ENCODE measurements at regions of chr3 and their contacts with region 1.

Region 1: GRCh38 chr3:141875374-141875892 is 1.0 kb upstream of the ATP1B3 start:
- DNase-seq: peak; percentile 72
- ATAC-seq: peak; percentile 64
- H3K4me3 Mint-ChIP-seq: peak overlapping the region; percentile 93
- H3K27ac Mint-ChIP-seq: peak overlapping the region; percentile 93
- H3K4me1 Mint-ChIP-seq: peaks cover 28% of the 10 kb centered on the region
- H3K27me3 Mint-ChIP-seq: no peaks in the 10 kb centered on the region
- CTCF ChIP-seq: no peak

Region 2: DNA sequence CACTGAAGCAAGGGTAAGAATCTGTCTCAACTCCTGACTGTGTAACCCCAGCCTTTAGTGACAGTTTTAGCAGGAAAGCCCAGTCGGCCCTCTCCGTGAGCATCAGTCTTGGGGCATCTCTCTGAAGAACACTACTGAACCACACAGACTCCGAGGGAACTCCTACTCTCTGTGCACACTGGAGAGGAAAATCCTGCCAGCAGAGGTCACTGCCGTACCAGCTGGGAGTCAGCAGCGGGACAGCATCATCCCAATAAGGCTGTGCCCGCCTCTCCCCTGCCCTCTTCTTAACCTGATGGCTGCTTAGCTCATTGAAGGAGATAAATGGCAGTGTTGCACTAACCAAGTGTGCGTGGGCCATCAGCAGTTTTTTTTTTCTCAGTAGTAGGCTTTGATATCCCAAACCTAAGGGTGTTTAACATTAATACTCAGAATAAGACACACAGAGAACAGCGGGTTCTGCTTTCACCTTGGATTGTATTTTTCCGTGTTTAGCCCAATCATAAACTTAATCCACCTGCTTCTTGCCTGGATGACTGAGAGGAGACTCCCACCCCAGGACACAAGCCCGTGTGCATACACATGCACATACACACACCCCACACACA is 415.2 kb before region 1 on chr3:
- CTCF ChIA-PET with region 1: interaction called, 3 read pairs
- POLR2A ChIA-PET with region 1: interaction called, 3 read pairs
- intact Hi-C with region 1: loop called (anchors 1 kb)
- DNase-seq: peak; percentile 67
- ATAC-seq: peak; percentile 99
- H3K4me3 Mint-ChIP-seq: no peak overlapping the region
- H3K27ac Mint-ChIP-seq: no peak overlapping the region
- H3K4me1 Mint-ChIP-seq: peaks cover 11% of the 10 kb centered on the region
- H3K27me3 Mint-ChIP-seq: no peaks in the 10 kb centered on the region
- CTCF ChIP-seq: no peak

Region 3: GRCh38 chr3:141796081-141796888 is 79.1 kb before region 1 on chr3:
- CTCF ChIA-PET with region 1: interaction called, 8 read pairs
- POLR2A ChIA-PET with region 1: interaction called, 20 read pairs
- intact Hi-C with region 1: loop called (anchors 1 kb)
- DNase-seq: peak; percentile 39
- ATAC-seq: peak; percentile 86
- H3K4me3 Mint-ChIP-seq: peak overlapping the region; percentile 85
- H3K27ac Mint-ChIP-seq: peak overlapping the region; percentile 85
- H3K4me1 Mint-ChIP-seq: peaks cover 34% of the 10 kb centered on the region
- H3K27me3 Mint-ChIP-seq: peaks cover 2% of the 10 kb centered on the region
- CTCF ChIP-seq: no peak

Region 4: GRCh38 chr3:141955175-141955574 is 79.7 kb after region 1 on chr3:
- CTCF ChIA-PET with region 1: no interaction called
- POLR2A ChIA-PET with region 1: no interaction called
- intact Hi-C with region 1: no loop called
- DNase-seq: no peak
- ATAC-seq: no peak
- H3K4me3 Mint-ChIP-seq: no peak overlapping the region
- H3K27ac Mint-ChIP-seq: no peak overlapping the region
- H3K4me1 Mint-ChIP-seq: peaks cover 5% of the 10 kb centered on the region
- H3K27me3 Mint-ChIP-seq: no peaks in the 10 kb centered on the region
- CTCF ChIP-seq: no peak

Region 5: DNA sequence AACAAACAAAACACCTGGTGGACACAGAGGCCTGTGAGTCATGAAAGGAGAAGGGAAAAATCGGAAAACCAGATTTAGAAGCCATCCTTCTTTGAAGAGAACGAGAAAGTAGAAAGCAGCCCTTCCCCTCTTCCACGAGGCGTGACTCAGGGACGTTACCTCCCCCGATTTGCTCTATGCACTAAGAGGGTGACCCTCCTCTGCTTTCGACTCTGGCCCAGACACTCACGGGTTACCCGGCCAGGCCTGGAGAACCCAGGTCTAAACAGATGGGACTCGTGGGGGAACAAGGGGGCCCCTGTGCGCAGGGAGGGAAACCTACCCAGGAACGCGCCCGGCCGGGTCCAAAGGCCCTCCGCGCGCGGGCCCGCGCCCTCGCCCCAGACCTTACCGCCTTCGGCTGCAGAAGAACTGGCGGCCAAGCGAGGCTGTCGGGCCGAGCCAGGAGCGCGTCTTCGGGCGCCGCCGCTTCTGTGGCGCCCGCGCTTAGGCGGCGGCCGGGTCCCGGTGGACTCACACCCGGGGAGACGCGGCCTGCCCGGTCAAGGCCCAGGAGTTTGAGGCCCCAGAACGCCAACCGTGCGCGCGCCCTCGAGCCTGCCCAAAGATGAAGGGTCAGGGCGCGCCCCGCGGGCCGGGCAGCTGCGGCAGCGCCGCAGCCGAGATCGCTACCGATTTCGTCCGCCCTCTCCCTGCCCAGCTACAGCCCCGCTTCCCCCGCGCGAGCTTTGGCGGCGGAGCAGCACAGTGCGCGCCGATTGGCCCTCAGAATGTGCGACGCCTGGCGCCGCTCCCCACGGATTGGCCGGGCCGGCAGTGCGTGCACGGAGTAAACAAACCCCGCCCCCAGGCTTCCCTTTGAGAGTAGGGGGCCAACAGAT is 273.6 kb after region 1 on chr3 and contains the start of gene TFDP2:
- CTCF ChIA-PET with region 1: no interaction called
- POLR2A ChIA-PET with region 1: no interaction called
- intact Hi-C with region 1: loop called (anchors 1 kb)
- DNase-seq: peak; percentile 78
- ATAC-seq: peak; percentile 99
- H3K4me3 Mint-ChIP-seq: peak within 1 kb of the TSS; percentile 86
- H3K27ac Mint-ChIP-seq: peak within 1 kb of the TSS; percentile 72
- H3K4me1 Mint-ChIP-seq: peaks cover 14% of the 10 kb centered on the region
- H3K27me3 Mint-ChIP-seq: no peaks in the 10 kb centered on the region
- CTCF ChIP-seq: no peak
- total RNA-seq, gene TFDP2: 20.0 and 23.1 TPM in 2 replicates

Region 6: GRCh38 chr3:142468456-142468855 is 593.0 kb after region 1 on chr3:
- CTCF ChIA-PET with region 1: no interaction called
- POLR2A ChIA-PET with region 1: no interaction called
- intact Hi-C with region 1: no loop called
- DNase-seq: no peak
- ATAC-seq: no peak
- H3K4me3 Mint-ChIP-seq: no peak overlapping the region
- H3K27ac Mint-ChIP-seq: no peak overlapping the region
- H3K4me1 Mint-ChIP-seq: no peaks in the 10 kb centered on the region
- H3K27me3 Mint-ChIP-seq: no peaks in the 10 kb centered on the region
- CTCF ChIP-seq: no peak

Region 7: DNA sequence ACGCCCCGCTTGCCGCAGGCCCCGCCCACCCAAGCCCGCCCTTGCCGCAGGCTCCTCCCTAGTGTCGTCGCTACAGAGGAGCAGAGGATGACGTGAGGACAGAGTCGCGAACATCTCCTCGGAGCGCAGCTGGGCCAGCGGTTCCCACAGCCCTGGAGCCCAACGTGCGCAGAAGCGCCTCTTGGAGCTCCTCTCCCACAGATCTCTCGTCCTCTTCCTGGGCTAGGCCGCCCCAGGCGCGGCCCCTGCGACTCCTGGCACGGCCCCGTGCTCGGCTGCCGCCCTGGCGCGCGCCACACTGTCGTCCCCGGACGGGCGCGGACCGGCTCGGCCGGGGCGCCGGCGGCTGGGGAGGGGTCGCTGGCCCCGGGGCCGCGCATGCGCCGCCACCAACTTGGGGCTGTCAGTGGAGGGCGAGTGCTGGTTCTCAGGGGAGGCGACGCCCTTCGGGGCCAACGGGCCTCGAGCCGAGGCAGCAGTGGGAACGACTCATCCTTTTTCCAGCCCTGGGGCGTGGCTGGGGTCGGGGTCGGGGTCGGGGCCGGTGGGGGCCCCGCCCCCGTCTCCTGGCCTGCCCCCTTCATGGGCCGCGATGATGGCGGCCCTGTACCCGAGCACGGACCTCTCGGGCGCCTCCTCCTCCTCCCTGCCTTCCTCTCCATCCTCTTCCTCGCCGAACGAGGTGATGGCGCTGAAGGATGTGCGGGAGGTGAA is 848.7 kb after region 1 on chr3 and contains the start of gene TRPC1:
- CTCF ChIA-PET with region 1: no interaction called
- POLR2A ChIA-PET with region 1: no interaction called
- intact Hi-C with region 1: loop called (anchors 2 kb)
- DNase-seq: peak; percentile 54
- ATAC-seq: peak; percentile 95
- H3K4me3 Mint-ChIP-seq: peak within 1 kb of the TSS; percentile 87
- H3K27ac Mint-ChIP-seq: peak within 1 kb of the TSS; percentile 76
- H3K4me1 Mint-ChIP-seq: peaks cover 5% of the 10 kb centered on the region
- H3K27me3 Mint-ChIP-seq: peaks cover 22% of the 10 kb centered on the region
- CTCF ChIP-seq: no peak
- total RNA-seq, gene TRPC1: 1.2 and 1.3 TPM in 2 replicates